Body of pancreas (tissue), 4 donors: ENCODE measurements at regions of chr20 and their contacts with region 1.

Region 1: DNA sequence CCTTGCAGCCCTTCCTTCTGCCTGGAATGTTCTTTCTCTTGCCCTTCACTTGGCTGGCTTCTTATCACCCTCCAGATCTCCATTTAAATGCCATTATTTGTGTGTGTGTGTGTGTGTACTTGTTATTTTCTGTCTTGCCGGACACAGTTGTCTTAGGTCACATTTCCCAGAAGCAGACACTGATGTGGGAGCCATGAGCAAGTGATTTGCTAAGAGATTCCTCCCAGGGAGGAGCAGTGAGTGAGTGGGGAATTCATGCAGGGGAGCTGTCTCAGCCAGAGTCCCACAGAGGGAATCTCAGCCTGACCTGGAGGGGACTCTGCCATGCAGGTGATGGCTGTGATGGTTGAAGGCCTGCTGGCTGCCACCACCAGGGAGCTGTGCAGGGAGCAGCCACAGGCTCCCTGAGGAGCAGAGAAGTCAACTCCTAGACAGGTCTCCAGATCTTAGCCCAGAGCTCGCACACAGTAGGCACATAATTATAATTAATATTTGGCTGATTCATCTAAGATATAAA is 96.5 kb downstream of the SYNDIG1 start:
- DNase-seq: no peak
- ATAC-seq: no peak
- H3K4me3 ChIP-seq: no peak overlapping the region
- H3K27ac ChIP-seq: no peak overlapping the region
- H3K4me1 ChIP-seq: no peaks in the 10 kb centered on the region
- H3K27me3 ChIP-seq: no peaks in the 10 kb centered on the region
- CTCF ChIP-seq: no peak
- POLR2A ChIP-seq: no peak

Region 2: GRCh38 chr20:24619212-24619611 is 53.3 kb after region 1 on chr20:
- intact Hi-C with region 1: loop called (anchors 5 kb)
- DNase-seq: no peak
- ATAC-seq: no peak
- H3K4me3 ChIP-seq: no peak overlapping the region
- H3K27ac ChIP-seq: no peak overlapping the region
- H3K4me1 ChIP-seq: no peaks in the 10 kb centered on the region
- H3K27me3 ChIP-seq: no peaks in the 10 kb centered on the region
- CTCF ChIP-seq: no peak
- POLR2A ChIP-seq: no peak